ENCODE measurements at regions of chr11 and their contacts with region 1.

Region 1: GRCh38 chr11:12269104-12269441 is 108.3 kb upstream of the PARVA start:
- DNase-seq: no peak
- ATAC-seq: peak in 2 of 4 donors; percentile 32 to 39
- H3K4me3 ChIP-seq: no peak overlapping the region
- H3K27ac ChIP-seq: no peak overlapping the region
- H3K4me1 ChIP-seq: no peaks in the 10 kb centered on the region
- H3K27me3 ChIP-seq: no peaks in the 10 kb centered on the region
- CTCF ChIP-seq: no peak

Region 2: DNA sequence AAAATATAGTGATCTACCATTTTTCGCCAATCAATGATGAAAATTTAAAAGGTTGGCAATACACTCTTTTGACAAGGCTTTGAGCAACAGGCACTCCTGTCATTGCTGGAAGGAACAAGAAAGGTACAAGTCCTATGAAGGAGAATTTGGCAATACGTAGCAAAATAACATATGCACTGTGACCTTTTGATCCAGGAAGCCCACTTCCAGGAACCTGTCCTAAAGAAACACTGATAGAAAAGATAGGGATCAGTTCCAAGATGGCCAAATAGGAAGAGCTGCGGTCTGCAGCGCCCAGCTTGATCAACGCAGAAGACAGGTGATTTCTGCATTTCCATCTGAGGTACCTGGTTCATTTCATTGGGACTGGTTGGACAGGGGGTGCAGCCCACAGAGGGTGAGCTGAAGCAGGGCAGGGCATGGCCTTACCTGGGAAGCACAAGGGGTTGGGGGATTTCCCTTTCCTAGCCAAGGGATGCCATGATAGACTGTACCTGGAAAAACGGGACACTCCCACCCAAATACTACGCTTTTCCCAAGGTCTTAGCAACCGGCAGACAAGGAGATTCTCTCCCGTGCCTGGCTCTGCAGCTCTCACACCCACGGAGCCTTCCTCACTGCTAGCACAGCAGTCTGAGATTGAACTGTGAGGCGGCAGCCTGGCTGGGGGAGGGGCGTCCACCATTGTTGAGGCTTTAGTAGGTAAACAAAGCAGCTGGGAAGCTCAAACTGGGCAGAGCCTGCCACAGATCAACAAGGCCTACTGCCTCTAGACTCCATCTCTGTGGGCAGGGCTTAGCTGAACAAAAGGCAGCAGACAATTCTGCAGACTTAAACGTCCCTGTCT is 577.6 kb before region 1 on chr11:
- intact Hi-C with region 1: loop called in 1 of 2 experiments (anchors 10 kb)
- DNase-seq: no peak
- ATAC-seq: no peak
- H3K4me3 ChIP-seq: no peak overlapping the region
- H3K27ac ChIP-seq: no peak overlapping the region
- H3K4me1 ChIP-seq: no peaks in the 10 kb centered on the region
- H3K27me3 ChIP-seq: no peaks in the 10 kb centered on the region
- CTCF ChIP-seq: no peak